Ascending aorta (tissue), 2 donors: ENCODE measurements at regions of chr6 and their contacts with region 1.

Region 1: GRCh38 chr6:15691250-15691869 is 28.5 kb upstream of the DTNBP1 start:
- DNase-seq: peak; percentile 53 to 88
- H3K4me3 ChIP-seq: peak overlapping the region; percentile 40 to 68
- H3K27ac ChIP-seq: peak overlapping the region; percentile 34 to 61
- H3K4me1 ChIP-seq: peaks cover 6 to 8% of the 10 kb centered on the region in 2 donors
- H3K27me3 ChIP-seq: no peaks in the 10 kb centered on the region
- CTCF ChIP-seq: peak; percentile 99

Region 2: DNA sequence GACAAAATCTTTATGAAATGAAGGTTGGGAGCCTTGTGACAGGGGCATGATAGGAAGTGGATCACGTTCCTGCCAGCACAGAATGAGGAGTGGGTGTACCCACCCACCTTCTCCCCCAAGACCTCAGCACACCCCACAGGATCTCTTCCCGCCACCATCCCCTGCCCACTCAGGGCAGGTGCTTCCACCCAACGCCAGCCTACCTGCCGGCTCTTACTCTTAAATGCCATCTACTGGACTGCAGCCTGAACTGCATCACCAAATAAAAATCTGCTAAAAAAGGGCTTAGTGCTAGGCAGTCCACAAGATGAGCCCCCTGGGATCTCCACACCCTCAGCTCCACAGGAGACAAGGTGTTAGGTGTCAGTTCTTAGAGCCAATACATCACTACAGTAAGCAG is 49.1 kb before region 1 on chr6:
- intact Hi-C with region 1: no loop called
- DNase-seq: no peak
- H3K4me3 ChIP-seq: no peak overlapping the region
- H3K27ac ChIP-seq: no peak overlapping the region
- H3K4me1 ChIP-seq: no peaks in the 10 kb centered on the region
- H3K27me3 ChIP-seq: no peaks in the 10 kb centered on the region
- CTCF ChIP-seq: no peak

Region 3: DNA sequence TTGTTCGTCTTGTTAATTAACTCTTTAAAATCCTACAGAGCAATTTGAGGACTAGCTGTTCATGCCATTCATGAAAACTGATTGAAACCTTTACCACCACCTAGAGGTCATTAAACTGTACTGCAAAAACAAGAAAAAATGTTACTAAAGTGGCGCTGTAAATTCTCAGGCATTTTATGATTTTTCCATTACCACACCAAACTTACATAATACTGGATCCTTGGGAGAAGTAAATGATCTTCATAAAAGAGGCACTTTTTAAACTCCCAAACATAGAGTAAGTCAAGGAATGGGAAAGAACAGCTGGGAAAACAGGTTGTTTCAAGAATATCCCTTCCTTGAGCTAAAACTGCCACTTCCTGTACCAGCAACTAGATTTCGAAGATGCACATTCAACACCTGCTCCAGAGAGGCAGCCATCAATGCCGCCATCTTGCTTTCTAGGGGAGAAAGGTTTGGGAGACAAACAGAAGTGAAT is 491.9 kb after region 1 on chr6:
- intact Hi-C with region 1: loop called (anchors 1 kb)
- DNase-seq: no peak
- H3K4me3 ChIP-seq: no peak overlapping the region
- H3K27ac ChIP-seq: peak overlapping the region; percentile 30 to 52
- H3K4me1 ChIP-seq: peaks cover 0 to 11% of the 10 kb centered on the region in 2 donors
- H3K27me3 ChIP-seq: no peaks in the 10 kb centered on the region
- CTCF ChIP-seq: peak; percentile 64 to 71 (median 69)

Region 4: GRCh38 chr6:16206595-16207037 is 515.3 kb after region 1 on chr6:
- intact Hi-C with region 1: loop called (anchors 1 kb)
- DNase-seq: peak in 1 of 2 donors; percentile 88
- H3K4me3 ChIP-seq: no peak overlapping the region
- H3K27ac ChIP-seq: peak overlapping the region; percentile 65 to 76
- H3K4me1 ChIP-seq: peaks cover 0 to 21% of the 10 kb centered on the region in 2 donors
- H3K27me3 ChIP-seq: no peaks in the 10 kb centered on the region
- CTCF ChIP-seq: peak; percentile 92 to 96 (median 95)

Region 5: GRCh38 chr6:16277101-16277981 is 586.0 kb after region 1 on chr6:
- intact Hi-C with region 1: loop called (anchors 1 kb)
- DNase-seq: peak; percentile 86 to 94
- H3K4me3 ChIP-seq: peak overlapping the region in 1 of 2 donors; percentile 31
- H3K27ac ChIP-seq: peak overlapping the region; percentile 76 to 79
- H3K4me1 ChIP-seq: peaks cover 5 to 14% of the 10 kb centered on the region in 2 donors
- H3K27me3 ChIP-seq: no peaks in the 10 kb centered on the region
- CTCF ChIP-seq: peak; percentile 59 to 70 (median 64)